ENCODE measurements at regions of chr17 and their contacts with region 1.

Region 1: GRCh38 chr17:79808763-79809529 is 12.1 kb upstream of the CBX8 start:
- DNase-seq: peak; percentile 52 to 59
- H3K4me3 ChIP-seq: no peak overlapping the region
- H3K27ac ChIP-seq: no peak overlapping the region
- H3K4me1 ChIP-seq: peaks cover 26 to 52% of the 10 kb centered on the region in 2 donors
- H3K27me3 ChIP-seq: peaks cover 83% of the 10 kb centered on the region
- CTCF ChIP-seq: peak in 4 of 6 experiments; percentile 48 to 68 (median 58)
- POLR2A ChIP-seq: no peak

Region 2: GRCh38 chr17:79707931-79708891 is 100.7 kb before region 1 on chr17:
- intact Hi-C with region 1: no loop called
- DNase-seq: peak; percentile 46 to 55
- H3K4me3 ChIP-seq: no peak overlapping the region
- H3K27ac ChIP-seq: no peak overlapping the region
- H3K4me1 ChIP-seq: peaks cover 0 to 4% of the 10 kb centered on the region in 2 donors
- H3K27me3 ChIP-seq: no peaks in the 10 kb centered on the region
- CTCF ChIP-seq: peak; percentile 51 to 80 (median 68)
- POLR2A ChIP-seq: no peak

Region 3: DNA sequence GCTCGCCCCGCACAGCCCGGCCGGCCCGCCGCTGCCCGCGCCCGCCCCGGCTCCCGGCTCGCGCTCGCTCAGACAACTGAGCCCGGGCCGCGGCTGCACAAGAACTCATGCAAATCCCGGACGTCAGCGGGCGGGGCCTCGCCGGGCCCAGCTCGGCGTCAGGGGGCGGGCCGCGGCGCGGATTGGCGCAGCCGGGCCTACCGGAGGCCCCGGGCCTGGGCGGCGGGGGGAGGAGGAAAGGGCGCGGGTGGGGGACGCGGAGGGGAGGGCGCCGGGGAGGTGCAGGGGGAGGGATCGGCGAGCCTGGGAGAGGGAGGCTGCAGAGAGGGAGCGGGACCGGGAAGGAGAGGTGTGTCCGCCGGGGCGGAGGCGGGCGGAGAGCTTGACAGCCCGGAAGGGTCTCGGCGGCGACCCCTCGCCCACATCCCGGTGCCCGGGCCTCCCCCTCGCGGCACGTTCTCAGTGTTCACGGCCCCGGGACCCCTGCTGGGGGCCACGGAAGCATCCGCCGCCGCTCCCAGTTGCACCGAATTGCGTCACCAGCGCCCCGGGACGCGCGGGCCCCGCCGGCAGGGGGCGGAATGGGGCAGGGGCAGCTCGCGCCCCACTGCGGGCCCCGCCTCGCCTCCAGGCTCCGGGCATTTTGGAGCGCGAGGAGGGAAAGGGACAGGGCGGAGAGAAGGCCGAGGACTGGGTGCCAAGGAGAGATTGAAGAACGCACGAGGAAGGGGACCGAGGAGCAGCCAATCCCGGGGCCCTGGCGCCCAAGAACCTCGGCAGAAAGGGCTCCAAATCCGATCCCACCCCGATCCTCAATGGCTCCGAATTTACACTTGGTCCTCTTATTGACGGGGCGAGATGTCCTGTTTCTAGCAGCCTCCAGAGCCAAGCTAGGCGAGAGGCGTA is 30.7 kb after region 1 on chr17 and contains the start of gene CBX4:
- intact Hi-C with region 1: loop called (anchors 5 kb)
- DNase-seq: peak; percentile 97
- H3K4me3 ChIP-seq: peak within 1 kb of the TSS; percentile 58 to 86 (median 67)
- H3K27ac ChIP-seq: peak within 1 kb of the TSS; percentile 90 to 97 (median 93)
- H3K4me1 ChIP-seq: peaks cover 54 to 66% of the 10 kb centered on the region in 2 donors
- H3K27me3 ChIP-seq: peaks cover 27% of the 10 kb centered on the region
- CTCF ChIP-seq: peak in 5 of 6 experiments; percentile 25 to 65 (median 51)
- POLR2A ChIP-seq: peak; percentile 82 to 98
- total RNA-seq, gene CBX4: 5.6 to 17.2 (median 13.5) TPM

Region 4: GRCh38 chr17:79874329-79874981 is 65.5 kb after region 1 on chr17:
- intact Hi-C with region 1: no loop called
- DNase-seq: no peak
- H3K4me3 ChIP-seq: no peak overlapping the region
- H3K27ac ChIP-seq: no peak overlapping the region
- H3K4me1 ChIP-seq: no peaks in the 10 kb centered on the region
- H3K27me3 ChIP-seq: no peaks in the 10 kb centered on the region
- CTCF ChIP-seq: peak in 5 of 6 experiments; percentile 36 to 59 (median 46)
- POLR2A ChIP-seq: no peak

Region 5: GRCh38 chr17:79923974-79924638 is 115.2 kb after region 1 on chr17:
- intact Hi-C with region 1: loop called (anchors 10 kb)
- DNase-seq: no peak
- H3K4me3 ChIP-seq: no peak overlapping the region
- H3K27ac ChIP-seq: no peak overlapping the region
- H3K4me1 ChIP-seq: peaks cover 16 to 29% of the 10 kb centered on the region in 2 donors
- H3K27me3 ChIP-seq: no peaks in the 10 kb centered on the region
- CTCF ChIP-seq: no peak
- POLR2A ChIP-seq: no peak

Measured in thyroid gland (tissue), 4 donors.